PC-9 (cell line): ENCODE measurements at regions of chr17 and their contacts with region 1.

Region 1: DNA sequence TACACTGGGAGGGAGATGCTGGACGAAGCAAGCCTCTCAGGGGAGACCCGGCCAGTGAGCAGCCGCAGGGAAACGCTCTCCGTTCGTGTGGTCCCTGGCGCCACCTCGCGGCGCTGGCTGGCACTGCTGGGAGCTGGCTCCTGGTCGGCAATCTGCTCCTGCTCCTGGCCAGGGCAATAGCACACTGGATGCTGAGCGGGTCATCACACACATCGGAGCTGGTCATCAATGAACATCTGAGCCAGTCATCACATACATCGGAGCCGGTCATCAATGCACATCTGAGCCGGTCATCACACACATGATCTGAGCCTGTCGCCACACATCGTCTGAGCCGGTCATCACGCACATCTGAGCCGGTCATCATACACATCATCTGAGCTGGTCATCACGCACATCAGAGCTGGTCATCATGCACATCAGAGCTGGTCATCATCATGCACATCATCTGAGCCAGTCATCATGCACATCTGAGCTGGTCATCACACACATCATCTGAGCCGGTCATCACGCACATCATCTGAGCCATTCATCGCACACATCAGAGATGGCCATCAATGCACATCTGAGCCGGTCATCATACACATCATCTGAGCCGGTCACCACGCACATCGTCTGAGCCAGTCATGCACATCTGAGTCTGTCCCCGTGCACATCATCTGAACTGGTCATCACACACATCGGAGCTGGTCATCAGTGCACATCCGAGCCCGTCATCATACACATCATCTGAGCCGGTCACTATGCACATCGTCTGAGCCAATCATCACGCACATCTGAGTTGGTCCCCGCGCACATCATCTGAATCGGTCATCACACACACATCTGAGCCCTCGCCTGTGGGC is 217.3 kb downstream of the RBFOX3 start:
- DNase-seq: peak in 1 of 2 experiments; percentile 74
- H3K4me3 ChIP-seq: no peak overlapping the region
- H3K27ac ChIP-seq: no peak overlapping the region
- H3K4me1 ChIP-seq: no peaks in the 10 kb centered on the region
- H3K27me3 ChIP-seq: peaks cover 60% of the 10 kb centered on the region
- CTCF ChIP-seq: peak; percentile 79

Region 2: GRCh38 chr17:79188048-79188447 is 205.5 kb before region 1 on chr17:
- CTCF ChIA-PET with region 1: interaction called, 5 read pairs
- POLR2A ChIA-PET with region 1: no interaction called
- intact Hi-C with region 1: loop called (anchors 5 kb)
- DNase-seq: peak in 1 of 2 experiments; percentile 22
- H3K4me3 ChIP-seq: no peak overlapping the region
- H3K27ac ChIP-seq: no peak overlapping the region
- H3K4me1 ChIP-seq: no peaks in the 10 kb centered on the region
- H3K27me3 ChIP-seq: peaks cover 80% of the 10 kb centered on the region
- CTCF ChIP-seq: peak; percentile 60

Region 3: DNA sequence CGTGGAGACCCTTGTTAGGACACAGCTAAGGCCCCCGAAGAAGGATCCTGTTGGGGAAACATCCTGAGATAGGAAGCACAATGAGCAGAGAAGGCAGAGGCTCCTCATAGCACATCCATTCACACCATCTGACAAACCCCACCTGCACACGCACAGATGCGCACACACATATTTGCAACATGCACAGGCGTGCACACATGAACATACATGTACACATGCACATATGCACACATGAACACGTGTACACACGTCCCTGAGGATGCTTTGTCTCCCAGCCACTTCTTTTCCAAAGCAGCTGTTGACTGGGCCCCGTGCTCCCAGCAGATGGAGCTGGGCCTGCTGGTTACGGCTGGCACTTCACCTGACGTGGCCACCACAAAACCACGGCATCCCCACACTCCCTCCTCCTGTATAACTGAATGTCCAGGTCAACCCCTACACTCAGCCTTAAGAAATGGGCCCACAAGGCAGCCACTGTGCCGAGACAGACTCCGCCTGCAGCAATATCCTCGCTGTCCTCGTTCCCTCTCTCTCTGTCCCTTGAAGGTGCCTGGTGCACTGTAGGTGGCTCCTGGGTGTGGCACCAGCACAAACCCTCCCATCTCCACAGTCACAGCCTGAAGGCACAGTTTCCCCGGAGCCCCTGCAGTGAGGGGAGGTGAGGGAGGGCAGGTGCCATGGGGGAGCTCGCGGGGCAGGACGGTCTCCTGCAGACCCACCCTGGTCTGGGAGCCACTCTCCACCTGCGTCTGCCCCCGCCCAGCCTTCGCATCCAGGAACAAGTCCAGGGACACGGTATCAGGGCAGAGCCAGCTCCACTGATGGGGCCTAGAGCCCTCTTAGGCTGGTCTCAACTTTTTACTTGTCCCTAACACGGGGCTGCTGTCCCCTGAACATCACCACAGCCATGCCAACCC is 34.3 kb after region 1 on chr17:
- CTCF ChIA-PET with region 1: no interaction called
- POLR2A ChIA-PET with region 1: no interaction called
- intact Hi-C with region 1: no loop called
- DNase-seq: no peak
- H3K4me3 ChIP-seq: no peak overlapping the region
- H3K27ac ChIP-seq: no peak overlapping the region
- H3K4me1 ChIP-seq: no peaks in the 10 kb centered on the region
- H3K27me3 ChIP-seq: peaks cover 97% of the 10 kb centered on the region
- CTCF ChIP-seq: no peak

Region 4: DNA sequence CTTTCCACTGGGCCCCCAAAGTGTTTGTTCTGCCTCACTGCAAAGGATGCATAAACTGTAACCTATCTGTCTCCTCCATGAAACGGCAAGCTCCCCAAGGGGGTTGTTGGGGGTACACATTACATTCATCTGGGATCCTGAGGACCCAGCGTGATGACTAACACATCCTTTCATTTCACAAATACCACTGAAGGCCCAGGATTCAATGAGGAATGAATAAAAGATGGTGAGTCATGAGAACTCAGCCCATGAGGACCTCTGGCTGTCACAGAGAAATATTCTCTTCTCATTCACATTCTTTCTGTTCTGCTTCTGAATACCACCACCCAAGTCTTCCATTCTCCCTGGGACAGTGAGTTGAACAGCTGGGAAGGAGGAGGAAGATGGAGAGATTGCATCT is 67.5 kb after region 1 on chr17:
- CTCF ChIA-PET with region 1: no interaction called
- POLR2A ChIA-PET with region 1: no interaction called
- intact Hi-C with region 1: no loop called
- DNase-seq: no peak
- H3K4me3 ChIP-seq: no peak overlapping the region
- H3K27ac ChIP-seq: no peak overlapping the region
- H3K4me1 ChIP-seq: no peaks in the 10 kb centered on the region
- H3K27me3 ChIP-seq: peaks cover 63% of the 10 kb centered on the region
- CTCF ChIP-seq: no peak